ENCODE measurements at regions of chr1 and their contacts with region 1.

Region 1: DNA sequence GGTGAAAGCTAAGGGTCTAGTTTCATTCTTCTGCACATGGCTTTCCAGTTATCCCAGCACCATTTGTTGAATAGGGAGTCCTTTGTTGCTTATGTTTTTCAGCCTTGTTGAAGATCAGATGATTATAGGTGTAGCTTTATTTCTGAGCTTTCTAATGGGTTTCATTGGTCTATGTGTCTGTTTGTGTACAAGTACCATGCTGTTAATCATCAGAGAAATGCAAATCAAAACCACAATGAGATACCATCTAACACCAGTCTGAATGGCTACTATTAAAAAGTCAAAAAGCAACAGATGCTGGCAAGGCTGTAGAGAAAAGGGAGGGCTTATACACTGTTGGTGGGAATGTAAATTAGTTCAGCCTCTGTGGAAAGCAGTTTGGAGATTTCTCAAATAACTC is 321.5 kb upstream of the PTBP2 start:
- DNase-seq: no peak
- H3K4me3 ChIP-seq: no peak overlapping the region
- H3K27ac ChIP-seq: no peak overlapping the region
- H3K27me3 ChIP-seq: no peaks in the 10 kb centered on the region
- CTCF ChIP-seq: no peak

Region 2: GRCh38 chr1:96309783-96310182 is 90.3 kb before region 1 on chr1:
- intact Hi-C with region 1: no loop called
- DNase-seq: no peak
- H3K4me3 ChIP-seq: no peak overlapping the region
- H3K27ac ChIP-seq: no peak overlapping the region
- H3K27me3 ChIP-seq: no peaks in the 10 kb centered on the region
- CTCF ChIP-seq: no peak

Region 3: GRCh38 chr1:96376843-96377242 is 23.2 kb before region 1 on chr1:
- intact Hi-C with region 1: loop called in 1 of 2 experiments (anchors 2 kb)
- DNase-seq: no peak
- H3K4me3 ChIP-seq: no peak overlapping the region
- H3K27ac ChIP-seq: no peak overlapping the region
- H3K27me3 ChIP-seq: no peaks in the 10 kb centered on the region
- CTCF ChIP-seq: no peak

Measured in dorsolateral prefrontal cortex (tissue), 120 donors.